Activated T-helper 1 cell treated with anti-CD3 and anti-CD28 coated beads, Interleukin-12 subunit alpha, Interleukin-12 subunit beta, Interleukin-2, Interleukin-4 antibody, amounts not matched to agents 30 ng/mL and 10 ng/mL and 1 ng/mL, durations not matched to agents 14 hours and 24 hours and 36 hours (primary cell): ENCODE measurements at regions of chr10 and their contacts with region 1.

Region 1: DNA sequence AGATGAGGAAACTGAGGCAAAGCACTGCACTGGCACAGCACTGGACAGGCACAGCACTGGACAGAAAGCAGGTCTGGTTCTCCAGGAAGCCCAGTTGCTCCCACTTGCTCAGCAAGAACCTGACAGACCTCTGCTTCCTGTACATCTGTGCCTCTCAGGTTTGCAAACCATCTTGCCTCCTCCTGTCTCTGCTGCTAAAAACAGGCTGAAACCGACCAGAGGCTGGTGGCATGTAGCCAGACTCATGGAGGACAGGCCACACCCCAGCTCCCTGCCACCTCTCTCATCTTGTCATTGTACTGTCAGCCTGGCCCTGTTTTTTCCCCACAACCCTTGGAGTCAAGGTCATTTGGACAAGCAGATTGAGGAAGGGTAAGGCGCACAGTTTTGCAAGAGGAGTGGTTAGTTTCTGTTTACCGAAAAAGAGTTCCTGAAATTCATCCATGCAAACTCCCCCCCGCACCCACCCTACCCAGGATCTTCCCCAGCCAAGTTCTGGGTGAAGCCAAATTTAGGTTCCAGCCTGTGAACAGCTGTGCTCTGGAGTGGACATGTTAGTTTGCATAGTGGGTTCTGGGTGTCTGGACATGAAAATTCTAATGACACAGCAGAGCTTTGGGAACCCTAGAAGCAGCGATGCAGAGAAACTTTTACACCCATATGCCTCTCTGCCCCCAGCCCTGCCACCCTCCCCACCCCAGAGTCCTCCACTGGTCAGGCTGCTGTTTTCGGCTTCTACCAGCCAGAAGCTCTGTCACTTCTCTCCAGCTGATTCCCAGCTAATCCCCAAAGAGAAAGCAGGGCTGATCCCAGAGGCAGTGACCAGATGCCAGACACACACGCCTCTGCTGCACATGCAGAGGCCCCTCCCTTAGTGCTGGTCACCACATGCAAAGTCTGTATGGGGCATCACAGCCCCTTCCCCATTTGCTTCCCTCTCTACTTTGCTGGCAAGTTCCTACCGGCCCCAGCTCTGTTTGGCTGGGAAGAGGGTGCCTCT is 8.5 kb upstream of the C10orf105 start:
- DNase-seq: peak; percentile 51
- H3K4me3 Mint-ChIP-seq: peak overlapping the region; percentile 59
- H3K27ac Mint-ChIP-seq: peak overlapping the region; percentile 99
- H3K4me1 Mint-ChIP-seq: peaks cover 66% of the 10 kb centered on the region
- H3K27me3 Mint-ChIP-seq: no peaks in the 10 kb centered on the region

Region 2: GRCh38 chr10:71666639-71667386 is 61.2 kb before region 1 on chr10:
- intact Hi-C with region 1: no loop called
- DNase-seq: no peak
- H3K4me3 Mint-ChIP-seq: no peak overlapping the region
- H3K27ac Mint-ChIP-seq: no peak overlapping the region
- H3K4me1 Mint-ChIP-seq: peaks cover 7% of the 10 kb centered on the region
- H3K27me3 Mint-ChIP-seq: peaks cover 6% of the 10 kb centered on the region

Region 3: GRCh38 chr10:71696628-71697326 is 31.3 kb before region 1 on chr10:
- intact Hi-C with region 1: loop called (anchors 1 kb)
- DNase-seq: peak; percentile 41
- H3K4me3 Mint-ChIP-seq: no peak overlapping the region
- H3K27ac Mint-ChIP-seq: no peak overlapping the region
- H3K4me1 Mint-ChIP-seq: peaks cover 53% of the 10 kb centered on the region
- H3K27me3 Mint-ChIP-seq: no peaks in the 10 kb centered on the region

Region 4: GRCh38 chr10:71748671-71749191 is 20.7 kb after region 1 on chr10:
- intact Hi-C with region 1: loop called (anchors 1 kb)
- DNase-seq: peak; percentile 79
- H3K4me3 Mint-ChIP-seq: peak overlapping the region; percentile 76
- H3K27ac Mint-ChIP-seq: peak overlapping the region; percentile 99
- H3K4me1 Mint-ChIP-seq: peaks cover 95% of the 10 kb centered on the region
- H3K27me3 Mint-ChIP-seq: no peaks in the 10 kb centered on the region

Region 5: DNA sequence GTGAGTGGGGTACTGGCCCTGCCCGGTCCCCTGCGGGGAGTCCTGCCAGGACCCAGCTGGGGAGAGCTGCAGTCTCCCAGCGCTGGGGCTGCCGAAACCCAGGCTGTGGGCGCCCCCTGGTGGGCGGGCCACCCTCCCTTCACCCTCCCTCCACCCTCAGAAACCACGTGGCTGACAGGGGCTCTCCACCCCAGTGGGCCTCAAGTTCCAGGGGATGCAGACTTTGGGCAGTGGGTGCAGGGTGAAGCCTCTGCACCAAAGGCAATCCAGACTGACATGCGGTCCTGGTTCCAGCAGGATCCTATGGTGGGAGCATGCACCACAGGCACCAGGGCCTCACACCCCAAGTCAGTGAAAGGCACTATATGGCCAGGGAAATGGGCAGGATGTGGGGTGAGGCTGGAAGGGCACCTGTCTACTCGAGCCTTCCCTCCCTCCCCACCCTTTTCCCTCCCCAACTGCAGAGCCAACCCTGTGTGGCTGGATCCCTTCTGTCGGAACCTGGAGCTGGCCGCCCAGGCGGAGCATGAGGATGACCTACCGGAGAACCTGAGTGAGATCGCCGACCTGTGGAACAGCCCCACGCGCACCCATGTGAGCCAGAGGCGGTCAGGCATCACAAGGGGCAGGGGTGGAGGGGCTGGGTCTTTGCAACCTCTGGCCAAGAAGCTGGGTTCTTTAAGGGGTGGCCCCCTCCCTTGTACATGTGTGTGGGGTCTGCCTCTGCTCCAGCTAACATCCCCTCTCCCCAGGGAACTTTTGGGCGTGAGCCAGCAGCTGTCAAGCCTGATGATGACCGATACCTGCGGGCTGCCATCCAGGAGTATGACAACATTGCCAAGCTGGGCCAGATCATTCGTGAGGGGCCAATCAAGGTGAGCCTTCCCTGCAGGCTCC is 84.2 kb after region 1 on chr10:
- intact Hi-C with region 1: loop called (anchors 1 kb)
- DNase-seq: peak; percentile 54
- H3K4me3 Mint-ChIP-seq: no peak overlapping the region
- H3K27ac Mint-ChIP-seq: no peak overlapping the region
- H3K4me1 Mint-ChIP-seq: no peaks in the 10 kb centered on the region
- H3K27me3 Mint-ChIP-seq: no peaks in the 10 kb centered on the region

Region 6: GRCh38 chr10:71933651-71934050 is 205.6 kb after region 1 on chr10:
- intact Hi-C with region 1: loop called (anchors 1 kb)
- DNase-seq: peak; percentile 37
- H3K4me3 Mint-ChIP-seq: peak overlapping the region; percentile 32
- H3K27ac Mint-ChIP-seq: peak overlapping the region; percentile 66
- H3K4me1 Mint-ChIP-seq: peaks cover 17% of the 10 kb centered on the region
- H3K27me3 Mint-ChIP-seq: peaks cover 13% of the 10 kb centered on the region